ENCODE measurements at regions of chr4 and their contacts with region 1.

Region 1: DNA sequence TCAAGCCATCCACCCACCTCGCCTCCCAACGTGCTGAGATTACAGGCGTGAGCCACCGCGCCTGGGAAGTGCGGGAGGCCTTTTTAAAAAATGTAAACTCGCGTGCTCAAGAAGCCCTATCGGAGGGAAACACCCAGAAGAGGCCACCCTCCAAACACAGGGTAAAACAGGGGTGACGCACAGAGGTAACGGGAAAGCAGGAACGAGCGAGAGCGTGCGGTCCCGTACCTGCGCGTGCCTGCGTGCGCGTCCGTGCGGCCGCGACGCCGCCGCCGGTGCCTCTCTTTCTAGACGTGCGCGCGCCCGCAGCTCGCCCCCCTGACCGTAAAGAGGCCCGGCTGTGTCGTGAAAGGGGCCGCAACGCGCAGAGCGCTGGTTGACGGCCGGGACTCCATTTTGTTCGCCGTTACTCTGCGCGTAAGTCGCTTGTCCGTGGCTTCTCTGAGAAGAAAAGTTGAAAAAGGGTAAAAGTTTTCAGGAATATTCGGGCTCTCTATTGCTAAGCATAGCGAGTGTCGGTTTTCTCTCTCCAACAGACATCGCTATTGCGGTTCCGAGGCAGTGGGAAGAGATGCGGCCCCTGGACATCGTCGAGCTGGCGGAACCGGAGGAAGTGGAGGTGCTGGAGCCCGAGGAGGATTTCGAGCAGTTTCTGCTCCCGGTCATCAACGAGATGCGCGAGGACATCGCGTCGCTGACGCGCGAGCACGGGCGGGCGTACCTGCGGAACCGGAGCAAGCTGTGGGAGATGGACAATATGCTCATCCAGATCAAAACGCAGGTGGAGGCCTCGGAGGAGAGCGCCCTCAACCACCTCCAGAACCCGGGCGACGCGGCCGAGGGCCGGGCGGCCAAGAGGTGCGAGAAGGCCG is at the start of gene MRFAP1:
- DNase-seq: peak; percentile 98
- H3K4me3 Mint-ChIP-seq: peak within 1 kb of the TSS; percentile 94
- H3K27ac Mint-ChIP-seq: peak within 1 kb of the TSS; percentile 94
- H3K4me1 Mint-ChIP-seq: peaks cover 20% of the 10 kb centered on the region
- H3K27me3 Mint-ChIP-seq: no peaks in the 10 kb centered on the region
- total RNA-seq, gene MRFAP1: 122 TPM in 2 replicates

Region 2: DNA sequence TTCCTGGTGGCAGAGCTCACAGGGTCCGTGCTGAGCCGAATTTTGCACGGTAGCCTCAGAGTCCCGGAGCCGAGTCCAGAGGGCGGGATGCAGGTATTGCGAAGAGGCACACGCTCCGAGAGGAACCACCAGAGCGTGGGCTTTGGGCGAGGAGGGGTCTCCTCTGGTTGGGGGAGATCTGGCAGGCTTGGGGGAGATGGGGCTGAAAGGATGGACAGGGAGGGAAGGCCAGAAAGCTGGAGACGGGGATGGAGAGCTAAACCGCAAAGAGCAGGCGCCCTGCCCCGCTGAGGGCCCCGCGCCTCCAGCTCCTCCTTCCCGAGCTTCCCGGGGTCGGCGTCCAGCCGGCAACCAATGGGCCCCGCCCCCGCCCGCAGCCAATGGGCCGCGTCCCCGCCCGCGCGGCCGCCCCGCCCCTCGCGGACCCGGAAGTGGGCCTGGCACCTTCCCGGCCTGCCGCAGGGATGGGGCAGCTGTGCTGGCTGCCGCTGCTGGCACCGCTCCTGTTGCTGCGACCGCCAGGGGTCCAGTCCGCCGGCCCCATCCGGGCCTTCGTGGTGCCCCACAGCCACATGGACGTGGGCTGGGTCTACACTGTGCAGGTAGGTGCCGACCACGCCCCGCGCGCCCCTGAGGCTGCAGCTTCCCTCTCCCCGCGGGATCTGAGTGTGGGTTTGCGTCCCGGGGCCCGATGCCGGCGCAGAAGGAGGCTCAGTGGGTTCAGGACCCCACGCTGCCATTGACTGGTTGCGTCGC is 65.6 kb before region 1 on chr4 and contains the start of gene MAN2B2:
- intact Hi-C with region 1: loop called (anchors 2 kb)
- DNase-seq: peak; percentile 96
- H3K4me3 Mint-ChIP-seq: peak within 1 kb of the TSS; percentile 89
- H3K27ac Mint-ChIP-seq: peak within 1 kb of the TSS; percentile 83
- H3K4me1 Mint-ChIP-seq: peaks cover 9% of the 10 kb centered on the region
- H3K27me3 Mint-ChIP-seq: peaks cover 8% of the 10 kb centered on the region
- total RNA-seq, gene MAN2B2: 12.7 and 14.9 TPM in 2 replicates

Region 3: DNA sequence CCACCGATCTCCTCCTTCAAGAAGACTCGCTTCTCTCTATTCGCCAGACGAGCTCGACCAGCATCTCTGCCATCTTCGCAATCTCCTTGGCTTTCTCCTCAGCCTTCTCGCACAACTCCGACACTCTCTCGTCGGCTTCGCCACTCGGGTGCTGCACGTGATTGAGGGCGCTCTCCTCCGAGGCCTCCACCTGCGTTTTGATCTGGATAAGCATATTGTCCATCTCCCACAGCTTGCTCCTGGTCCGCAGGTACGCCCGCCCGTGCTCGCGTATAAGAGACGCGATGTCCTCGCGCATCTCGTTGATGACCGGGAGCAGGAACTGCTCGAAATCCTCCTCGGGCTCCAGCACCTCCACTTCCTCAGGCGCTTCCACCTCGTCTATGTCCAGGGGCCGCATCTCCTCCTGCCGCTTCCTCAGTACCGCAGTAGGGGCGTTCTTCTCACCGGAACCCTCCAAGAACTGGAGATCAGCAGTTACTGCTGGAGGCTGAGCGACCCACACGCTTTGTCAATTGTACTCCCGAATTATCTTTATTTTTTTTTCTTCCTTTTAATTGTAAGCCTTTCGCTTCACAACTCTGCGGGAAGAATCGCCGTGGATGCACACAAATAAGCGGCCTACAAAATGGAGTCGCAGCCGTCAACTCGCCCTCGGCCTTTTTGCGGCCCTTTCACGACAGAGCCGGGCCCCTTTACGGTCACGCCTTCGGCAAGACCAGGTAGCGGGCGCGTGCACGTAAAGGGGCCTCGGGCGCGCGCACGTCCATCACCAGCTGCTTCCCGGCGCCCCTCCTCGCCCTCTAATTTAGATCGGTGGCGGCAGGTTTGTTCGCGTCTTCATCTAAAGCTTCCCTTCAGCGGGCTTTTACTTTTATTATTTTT is 68.9 kb after region 1 on chr4 and contains the start of gene MRFAP1L1:
- intact Hi-C with region 1: loop called (anchors 1 kb)
- DNase-seq: peak; percentile 99
- H3K4me3 Mint-ChIP-seq: peak within 1 kb of the TSS; percentile 95
- H3K27ac Mint-ChIP-seq: peak within 1 kb of the TSS; percentile 97
- H3K4me1 Mint-ChIP-seq: peaks cover 51% of the 10 kb centered on the region
- H3K27me3 Mint-ChIP-seq: no peaks in the 10 kb centered on the region
- total RNA-seq, gene MRFAP1L1: 51.4 TPM in 2 replicates

Region 4: DNA sequence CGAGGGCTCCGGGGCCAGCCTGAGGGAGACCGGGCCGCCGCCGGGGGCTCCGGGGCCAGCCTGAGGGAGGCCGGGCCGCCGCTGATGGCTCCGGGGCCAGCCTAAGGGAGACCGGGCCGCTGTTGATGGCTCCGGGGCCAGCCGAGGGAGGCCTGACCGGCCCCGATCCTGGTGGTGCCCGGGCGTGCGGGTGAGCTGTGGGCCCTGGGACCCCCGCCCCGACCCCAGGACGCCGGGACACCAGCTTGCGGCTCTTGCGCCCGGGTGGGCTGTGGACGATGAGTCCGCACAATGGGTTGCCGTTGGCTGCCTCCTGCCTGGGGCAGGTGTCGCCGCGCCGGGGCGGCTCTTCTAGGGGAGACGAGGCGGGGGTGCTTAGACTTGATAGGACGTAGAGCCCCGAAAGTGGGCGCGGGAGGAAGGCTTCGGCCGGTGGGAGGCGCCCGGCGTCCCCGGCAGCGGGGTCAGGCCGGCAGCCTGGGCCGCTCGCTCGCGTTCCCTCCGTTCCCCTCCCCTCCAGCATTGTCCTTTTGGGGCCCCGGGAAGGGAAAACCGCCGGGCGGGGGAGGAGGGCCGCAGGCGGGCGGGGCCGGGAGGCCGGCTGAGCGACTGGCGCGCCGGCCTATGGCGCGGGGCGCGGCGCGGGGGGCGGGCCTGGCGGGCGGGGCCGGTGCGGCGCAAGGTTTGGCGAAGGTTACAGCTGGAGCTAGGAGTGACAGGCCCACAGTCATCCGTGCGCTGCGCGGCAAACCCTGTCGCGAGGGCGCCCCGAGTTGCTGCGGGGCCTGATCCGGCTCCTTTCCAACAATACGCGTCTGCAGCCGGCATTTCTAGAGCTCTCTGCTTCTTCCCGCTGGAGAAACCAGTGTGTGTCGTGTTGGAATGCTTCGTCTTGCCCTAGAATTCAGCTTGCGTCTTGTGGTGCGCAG is 142.8 kb after region 1 on chr4:
- intact Hi-C with region 1: loop called (anchors 1 kb)
- DNase-seq: peak; percentile 96
- H3K4me3 Mint-ChIP-seq: peak overlapping the region; percentile 88
- H3K27ac Mint-ChIP-seq: peak overlapping the region; percentile 75
- H3K4me1 Mint-ChIP-seq: peaks cover 43% of the 10 kb centered on the region
- H3K27me3 Mint-ChIP-seq: no peaks in the 10 kb centered on the region

Region 5: GRCh38 chr4:6986781-6987587 is 346.5 kb after region 1 on chr4:
- intact Hi-C with region 1: loop called (anchors 1 kb)
- DNase-seq: peak; percentile 98
- H3K4me3 Mint-ChIP-seq: peak overlapping the region; percentile 96
- H3K27ac Mint-ChIP-seq: peak overlapping the region; percentile 95
- H3K4me1 Mint-ChIP-seq: peaks cover 72% of the 10 kb centered on the region
- H3K27me3 Mint-ChIP-seq: no peaks in the 10 kb centered on the region

Measured in activated CD4-positive, alpha-beta T cell treated with anti-CD3 and anti-CD28 coated beads, Interleukin-2, amount 10 ng/mL, durations not matched to agents 24 days and 14 days (primary cell).